Esophagus squamous epithelium (tissue), 5 donors: ENCODE measurements at regions of chr3 and their contacts with region 1.

Region 1: DNA sequence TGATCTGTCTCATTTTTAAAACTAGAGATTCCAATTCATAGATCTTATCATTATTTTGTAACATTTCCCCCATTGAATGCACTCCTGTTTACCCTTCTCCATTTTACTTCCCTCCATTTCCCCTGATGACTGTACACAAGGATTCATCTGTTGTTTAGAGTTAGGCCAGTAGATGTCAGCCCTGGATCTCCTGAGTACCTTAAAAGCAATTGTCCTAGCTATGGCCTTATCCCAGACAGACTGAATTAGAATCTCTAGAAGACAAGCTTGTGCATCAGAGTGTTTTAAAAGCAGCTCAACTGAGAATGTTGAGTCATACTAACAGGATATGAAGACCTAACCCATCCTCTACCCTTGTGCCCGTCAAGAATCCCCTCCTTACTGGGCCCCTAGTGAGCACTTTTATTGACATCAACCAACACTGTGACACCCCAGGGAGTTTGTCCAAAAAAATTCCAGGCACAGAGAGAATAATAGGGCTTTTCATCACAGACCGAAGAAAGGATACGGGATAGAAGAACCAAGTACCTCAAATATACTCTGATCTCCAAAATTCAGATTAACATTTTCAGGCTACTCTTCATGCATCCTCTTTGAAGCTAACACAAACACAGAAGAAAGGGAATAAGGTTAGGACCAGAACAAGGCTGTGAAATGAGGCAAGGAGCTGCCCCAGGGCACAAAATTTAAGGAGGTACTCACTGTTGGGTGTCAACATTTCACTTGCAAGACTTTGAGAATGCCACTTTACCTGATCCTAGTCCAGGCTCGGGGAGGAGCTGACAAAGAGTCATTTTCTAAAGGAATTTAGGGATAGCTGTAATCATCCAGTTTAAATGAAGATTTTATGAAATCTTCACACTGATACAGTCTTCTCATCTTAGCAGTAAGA is 17.1 kb downstream of the ZBED2 start:
- DNase-seq: no peak
- H3K4me3 ChIP-seq: no peak overlapping the region
- H3K27ac ChIP-seq: no peak overlapping the region
- H3K4me1 ChIP-seq: no peaks in the 10 kb centered on the region
- H3K27me3 ChIP-seq: peaks cover 0 to 28% (median 0%) of the 10 kb centered on the region in 4 donors
- CTCF ChIP-seq: peak in 5 of 6 experiments; percentile 11 to 77 (median 24)
- POLR2A ChIP-seq: no peak

Region 2: DNA sequence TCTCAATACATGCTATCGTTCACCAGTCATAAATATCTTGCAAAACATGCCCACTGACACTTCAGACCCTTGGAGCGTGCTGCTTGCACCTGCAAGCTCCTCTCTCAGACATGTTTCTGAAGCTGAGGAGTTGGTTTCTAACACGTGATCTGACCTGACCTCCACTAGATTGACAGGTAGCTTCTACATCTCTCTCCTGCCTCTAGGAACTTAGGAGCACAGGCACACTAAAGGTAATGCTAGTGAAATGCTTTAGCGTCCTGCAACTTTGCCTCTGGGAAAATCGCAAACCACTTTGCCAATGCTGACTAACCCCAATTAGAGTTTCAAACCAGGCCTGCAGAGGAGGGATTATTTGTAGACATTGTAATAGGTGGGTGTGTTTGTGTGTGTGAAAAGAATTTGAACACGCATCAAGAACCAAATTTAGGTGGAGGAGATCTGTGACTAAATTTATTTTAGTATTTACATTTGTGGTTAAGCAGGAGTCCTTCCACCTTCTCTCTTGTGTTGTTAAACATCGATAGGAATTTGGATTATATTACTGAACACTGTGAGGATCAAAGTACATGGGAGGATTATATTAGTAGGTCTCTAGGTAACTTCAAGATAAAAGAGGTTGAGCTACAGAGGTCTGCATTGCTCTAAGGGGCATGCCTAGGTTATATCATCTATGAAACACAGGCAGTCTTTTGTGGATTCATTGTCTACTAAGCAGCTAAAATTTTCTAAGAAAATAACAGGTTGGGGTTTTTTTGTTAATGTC is 103.8 kb after region 1 on chr3:
- intact Hi-C with region 1: loop called (anchors 10 kb)
- DNase-seq: no peak
- H3K4me3 ChIP-seq: no peak overlapping the region
- H3K27ac ChIP-seq: no peak overlapping the region
- H3K4me1 ChIP-seq: peaks cover 0 to 13% (median 5%) of the 10 kb centered on the region in 3 donors
- H3K27me3 ChIP-seq: no peaks in the 10 kb centered on the region
- CTCF ChIP-seq: no peak
- POLR2A ChIP-seq: no peak